Naive thymus-derived CD4-positive, alpha-beta T cell (primary cell): ENCODE measurements at regions of chr6 and their contacts with region 1.

Region 1: DNA sequence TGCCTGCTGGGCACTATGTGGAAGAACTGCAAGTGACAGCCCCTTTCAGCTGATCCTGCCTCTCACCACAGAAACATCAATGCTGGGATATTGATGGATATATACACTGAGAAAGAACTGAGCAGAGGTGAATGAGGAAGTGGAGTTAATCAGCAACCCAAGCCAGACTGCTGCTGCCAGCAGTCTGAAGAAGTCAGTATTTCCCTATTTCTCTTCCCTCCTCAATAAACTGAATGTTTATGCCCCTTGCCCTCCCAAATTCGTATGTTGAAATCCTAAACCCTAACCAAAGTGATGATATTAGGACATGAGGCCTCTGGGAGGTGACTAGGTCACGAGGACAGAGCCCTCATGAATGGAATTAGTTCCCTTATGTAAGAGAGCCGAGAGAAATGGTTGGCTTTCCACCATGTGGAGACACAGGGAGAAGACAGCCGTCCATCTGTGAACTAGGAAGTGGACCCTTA is 76.3 kb downstream of the CDK19 start:
- DNase-seq: no peak
- ATAC-seq: peak; percentile 81
- H3K4me3 ChIP-seq: no peak overlapping the region
- H3K4me3 Mint-ChIP-seq: no peak overlapping the region
- H3K27ac ChIP-seq: no peak overlapping the region
- H3K27ac Mint-ChIP-seq: no peak overlapping the region
- H3K4me1 ChIP-seq: no peaks in the 10 kb centered on the region
- H3K4me1 Mint-ChIP-seq: peaks cover 0 to 4% (median 0%) of the 10 kb centered on the region in 7 donors
- H3K27me3 ChIP-seq: no peaks in the 10 kb centered on the region
- H3K27me3 Mint-ChIP-seq: no peaks in the 10 kb centered on the region

Region 2: GRCh38 chr6:110682460-110682853 is 56.5 kb before region 1 on chr6:
- CTCF ChIA-PET with region 1: no interaction called
- POLR2A ChIA-PET with region 1: no interaction called
- intact Hi-C with region 1: no loop called
- DNase-seq: peak in 8 of 9 donors; percentile 42 to 84 (median 76)
- ATAC-seq: peak; percentile 99
- H3K4me3 ChIP-seq: no peak overlapping the region
- H3K4me3 Mint-ChIP-seq: no peak overlapping the region
- H3K27ac ChIP-seq: no peak overlapping the region
- H3K27ac Mint-ChIP-seq: peak overlapping the region in 4 of 9 donors; percentile 23 to 55 (median 44)
- H3K4me1 ChIP-seq: peaks cover 5 to 8% of the 10 kb centered on the region in 2 donors
- H3K4me1 Mint-ChIP-seq: peaks cover 5 to 18% (median 11%) of the 10 kb centered on the region in 7 donors
- H3K27me3 ChIP-seq: no peaks in the 10 kb centered on the region
- H3K27me3 Mint-ChIP-seq: no peaks in the 10 kb centered on the region

Region 3: DNA sequence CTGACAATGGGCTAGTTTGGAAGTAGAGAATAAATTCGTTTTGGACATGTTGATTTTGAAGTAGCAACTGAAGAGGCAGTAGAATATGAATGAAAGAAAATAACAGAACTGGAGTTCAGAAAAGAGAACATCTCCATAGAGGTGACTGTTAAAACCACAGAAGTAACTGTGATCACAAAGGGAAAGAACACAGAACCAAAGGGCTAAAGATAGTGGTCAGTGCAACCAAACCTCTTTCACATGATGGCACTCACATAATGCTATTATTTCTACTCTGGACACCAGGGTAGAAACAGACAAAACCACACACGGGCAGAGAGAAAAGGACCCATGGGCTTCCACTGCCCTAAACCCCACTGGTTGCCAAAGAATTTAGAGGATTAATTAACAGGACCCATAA is 17.9 kb after region 1 on chr6:
- CTCF ChIA-PET with region 1: no interaction called
- POLR2A ChIA-PET with region 1: no interaction called
- intact Hi-C with region 1: no loop called
- DNase-seq: no peak
- ATAC-seq: no peak
- H3K4me3 ChIP-seq: no peak overlapping the region
- H3K4me3 Mint-ChIP-seq: no peak overlapping the region
- H3K27ac ChIP-seq: no peak overlapping the region
- H3K27ac Mint-ChIP-seq: no peak overlapping the region
- H3K4me1 ChIP-seq: no peaks in the 10 kb centered on the region
- H3K4me1 Mint-ChIP-seq: peaks cover 0 to 11% (median 4%) of the 10 kb centered on the region in 7 donors
- H3K27me3 ChIP-seq: no peaks in the 10 kb centered on the region
- H3K27me3 Mint-ChIP-seq: no peaks in the 10 kb centered on the region

Region 4: DNA sequence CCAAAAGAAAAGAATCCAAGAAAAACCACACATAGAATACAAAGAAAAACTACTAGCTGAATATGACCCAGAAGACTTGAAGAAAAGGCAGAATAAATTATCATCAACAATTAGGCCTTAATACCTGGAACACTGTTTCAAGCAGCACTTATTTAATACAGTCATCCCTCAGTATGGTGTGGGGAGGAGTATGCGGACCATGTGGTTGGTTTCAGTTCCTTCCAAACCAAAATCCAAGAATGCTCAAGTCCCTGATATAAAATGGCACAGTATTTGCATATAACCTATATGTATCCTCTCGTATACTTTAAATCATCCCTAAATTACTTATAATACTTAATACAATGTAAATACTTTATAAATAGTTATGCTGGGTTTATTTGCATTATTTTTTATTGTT is 60.3 kb after region 1 on chr6:
- CTCF ChIA-PET with region 1: no interaction called
- POLR2A ChIA-PET with region 1: no interaction called
- intact Hi-C with region 1: loop called in 1 of 2 experiments (anchors 10 kb)
- DNase-seq: no peak
- ATAC-seq: no peak
- H3K4me3 ChIP-seq: no peak overlapping the region
- H3K4me3 Mint-ChIP-seq: no peak overlapping the region
- H3K27ac ChIP-seq: no peak overlapping the region
- H3K27ac Mint-ChIP-seq: no peak overlapping the region
- H3K4me1 ChIP-seq: no peaks in the 10 kb centered on the region
- H3K4me1 Mint-ChIP-seq: peaks cover 14 to 28% (median 24%) of the 10 kb centered on the region in 7 donors
- H3K27me3 ChIP-seq: no peaks in the 10 kb centered on the region
- H3K27me3 Mint-ChIP-seq: no peaks in the 10 kb centered on the region